ENCODE measurements at regions of chr1 and their contacts with region 1.

Region 1: GRCh38 chr1:15261155-15262002 is 14.4 kb downstream of the FHAD1 start:
- DNase-seq: no peak
- H3K4me3 Mint-ChIP-seq: peak overlapping the region; percentile 21
- H3K27ac Mint-ChIP-seq: no peak overlapping the region
- H3K4me1 Mint-ChIP-seq: peaks cover 16% of the 10 kb centered on the region
- H3K27me3 Mint-ChIP-seq: peaks cover 49% of the 10 kb centered on the region

Region 2: DNA sequence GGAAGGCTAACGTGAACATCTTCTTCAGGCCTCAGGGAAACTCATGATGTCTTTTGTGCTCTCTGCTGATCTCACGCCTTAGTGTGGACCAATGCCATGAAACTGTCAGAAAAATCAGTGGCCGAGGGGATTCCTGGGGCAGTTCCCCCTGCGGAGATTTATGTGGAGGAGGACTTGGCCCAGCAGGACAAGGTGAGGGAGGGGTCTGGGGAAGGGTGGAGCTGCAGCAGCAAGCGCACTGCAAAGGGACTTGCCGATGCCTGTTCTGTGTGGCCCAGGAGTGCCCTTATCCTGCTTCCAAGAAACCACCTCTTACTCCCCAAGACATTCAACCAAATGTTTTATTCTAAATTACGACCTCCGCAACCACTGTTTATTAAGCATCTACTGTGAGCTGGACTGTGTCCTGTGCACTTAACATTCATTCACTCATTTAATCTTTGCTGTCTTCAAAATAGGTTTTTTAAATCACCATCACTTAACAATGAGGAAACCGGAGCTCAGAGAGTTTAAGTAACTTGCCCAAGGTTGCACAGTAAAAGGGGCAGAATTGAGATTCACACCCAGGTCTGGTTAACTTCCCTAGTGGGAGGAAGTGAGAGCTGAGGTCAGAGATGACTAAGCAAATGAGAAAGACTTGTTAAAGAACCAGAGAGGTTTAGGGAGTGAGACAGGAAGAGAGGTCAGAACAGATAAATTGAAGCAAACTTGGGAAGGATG is 35.4 kb after region 1 on chr1:
- intact Hi-C with region 1: loop called (anchors 5 kb)
- DNase-seq: no peak
- H3K4me3 Mint-ChIP-seq: no peak overlapping the region
- H3K27ac Mint-ChIP-seq: peak overlapping the region; percentile 0
- H3K4me1 Mint-ChIP-seq: peaks cover 9% of the 10 kb centered on the region
- H3K27me3 Mint-ChIP-seq: peaks cover 3% of the 10 kb centered on the region